Right ventricle myocardium inferior (tissue), 1 donor: ENCODE measurements at regions of chr22 and their contacts with region 1.

Region 1: GRCh38 chr22:38353142-38353629 is 36.0 kb upstream of the CSNK1E start:
- DNase-seq: peak; percentile 91
- ATAC-seq: peak; percentile 85

Region 2: DNA sequence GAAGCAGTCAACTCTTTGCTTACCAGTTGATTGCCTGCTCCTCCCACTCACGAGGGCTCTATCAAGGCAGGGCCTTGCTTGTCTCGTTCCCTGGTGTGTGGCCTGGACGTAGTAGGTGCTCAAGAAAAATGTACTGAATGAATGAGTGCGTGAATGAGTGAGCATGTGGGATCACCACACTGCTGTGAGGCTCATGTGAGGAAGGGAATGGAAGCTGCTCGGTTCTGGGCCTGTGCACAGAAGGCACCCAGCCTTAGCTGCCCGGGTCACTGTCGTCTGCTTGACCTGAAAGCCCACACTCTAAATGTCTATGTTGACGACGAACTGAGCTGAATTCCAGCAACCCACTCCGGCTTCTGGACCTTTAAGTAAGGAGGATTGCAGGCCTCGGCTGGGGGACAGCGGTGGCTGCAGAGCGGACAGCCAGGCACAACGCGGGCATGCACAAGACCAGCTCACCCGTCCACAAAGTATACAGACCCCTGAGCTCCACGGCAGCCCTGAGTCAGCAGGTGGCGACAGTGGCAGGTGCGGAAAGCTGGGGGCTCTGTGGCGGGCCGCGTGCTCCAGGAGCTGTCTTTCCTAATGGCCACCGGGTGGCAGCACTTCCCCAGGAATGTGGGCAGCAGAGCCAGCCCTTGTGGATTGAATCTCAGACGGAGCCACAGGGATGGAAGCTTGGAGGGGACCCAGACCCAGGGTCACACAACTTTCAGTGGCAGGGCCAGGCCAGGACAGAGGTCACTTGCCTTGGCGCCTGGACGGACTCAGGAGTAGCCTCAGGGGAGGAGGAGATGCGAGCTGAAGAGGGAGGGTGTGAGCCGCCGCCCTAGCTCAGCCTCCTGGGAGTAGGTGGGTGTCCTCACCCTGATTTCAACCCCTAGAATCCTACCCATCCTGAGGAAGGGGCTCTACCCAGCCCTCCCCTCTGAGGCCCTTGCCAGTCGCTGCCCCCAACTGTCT is 301.0 kb before region 1 on chr22:
- intact Hi-C with region 1: loop called (anchors 2 kb)
- DNase-seq: peak; percentile 89
- ATAC-seq: peak; percentile 70

Region 3: DNA sequence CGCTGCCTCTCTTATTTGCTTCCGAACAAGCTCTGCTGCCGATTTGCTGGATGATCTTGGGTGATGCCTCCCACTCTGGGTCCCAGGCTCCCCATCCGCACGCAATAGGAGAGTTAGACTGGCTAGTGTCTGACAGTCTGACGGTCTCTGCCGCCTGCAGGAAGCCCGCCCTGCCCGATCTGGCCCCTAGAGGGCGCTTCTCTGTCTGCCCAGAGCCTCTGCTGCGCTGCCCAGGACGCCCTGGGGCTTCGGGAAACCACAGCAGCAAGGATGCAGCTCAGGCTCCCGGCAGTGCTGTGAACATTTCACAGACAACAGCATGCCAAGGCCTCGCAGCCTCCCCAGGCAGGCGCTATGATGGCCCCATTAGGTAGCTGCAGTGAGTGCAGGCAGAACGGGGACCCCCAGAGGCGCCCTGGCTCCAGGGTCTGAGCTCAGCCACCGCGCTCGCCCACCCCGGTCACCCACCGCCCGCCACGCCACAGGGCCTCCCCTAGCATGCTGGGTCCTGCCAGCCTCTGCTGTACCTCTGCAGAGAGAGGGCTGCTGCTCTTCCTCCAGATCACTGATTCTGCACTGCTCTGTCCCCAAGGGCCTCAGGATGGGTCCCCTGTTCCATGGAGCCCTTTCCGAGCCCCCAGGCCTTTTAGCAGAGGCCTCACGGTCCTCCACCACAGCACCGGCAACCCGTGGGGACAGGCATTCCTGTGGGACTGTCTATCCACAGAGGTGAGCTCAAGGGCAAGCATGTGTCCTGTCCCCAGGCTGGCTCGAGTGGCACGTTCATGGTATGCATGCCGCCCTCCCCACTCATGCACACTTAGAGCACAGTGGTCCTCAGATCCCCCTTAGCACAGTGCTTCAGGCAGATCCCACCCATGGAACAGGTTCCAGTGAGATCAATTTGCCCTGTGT is 238.4 kb before region 1 on chr22:
- intact Hi-C with region 1: loop called (anchors 1 kb)
- DNase-seq: peak; percentile 93
- ATAC-seq: peak; percentile 93

Region 4: DNA sequence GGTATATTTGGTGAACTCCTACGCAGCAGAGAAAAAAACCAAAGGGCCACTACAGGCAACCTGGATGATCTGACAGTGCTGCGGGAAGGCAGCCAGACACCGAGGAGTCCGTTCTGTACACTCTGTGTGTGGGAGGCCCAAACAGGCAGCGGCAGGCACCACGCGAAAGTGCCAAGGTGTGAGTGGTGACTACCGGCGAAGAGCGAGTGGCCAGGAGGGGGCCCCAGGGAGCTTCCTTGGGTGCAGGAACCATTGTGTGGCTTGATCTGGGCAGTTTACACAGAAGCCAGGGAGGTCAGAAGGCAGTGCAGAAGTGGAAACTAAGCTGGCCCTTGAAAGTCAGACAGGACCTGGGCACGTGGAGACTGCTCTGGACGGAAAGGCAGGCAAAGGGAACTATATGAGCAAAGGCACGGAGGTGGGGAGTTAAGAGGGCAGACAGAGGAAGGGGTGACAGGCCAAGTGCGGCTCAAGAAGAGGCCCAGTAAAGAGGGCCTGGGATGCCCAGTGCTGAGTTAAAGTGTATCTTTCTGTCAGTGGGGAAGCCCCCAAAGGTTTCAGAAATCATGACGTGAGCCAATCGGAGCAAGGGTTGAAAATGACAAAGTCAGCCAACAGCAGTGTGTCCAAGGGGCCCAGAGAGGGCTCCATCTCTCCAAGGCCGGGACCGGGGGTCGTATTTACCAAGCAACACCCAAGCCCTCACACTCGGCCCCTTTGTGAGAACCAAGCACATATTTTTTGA is 91.0 kb before region 1 on chr22:
- intact Hi-C with region 1: loop called (anchors 5 kb)
- DNase-seq: peak; percentile 75
- ATAC-seq: peak; percentile 45